ENCODE measurements at regions of chr16 and their contacts with region 1.

Region 1: DNA sequence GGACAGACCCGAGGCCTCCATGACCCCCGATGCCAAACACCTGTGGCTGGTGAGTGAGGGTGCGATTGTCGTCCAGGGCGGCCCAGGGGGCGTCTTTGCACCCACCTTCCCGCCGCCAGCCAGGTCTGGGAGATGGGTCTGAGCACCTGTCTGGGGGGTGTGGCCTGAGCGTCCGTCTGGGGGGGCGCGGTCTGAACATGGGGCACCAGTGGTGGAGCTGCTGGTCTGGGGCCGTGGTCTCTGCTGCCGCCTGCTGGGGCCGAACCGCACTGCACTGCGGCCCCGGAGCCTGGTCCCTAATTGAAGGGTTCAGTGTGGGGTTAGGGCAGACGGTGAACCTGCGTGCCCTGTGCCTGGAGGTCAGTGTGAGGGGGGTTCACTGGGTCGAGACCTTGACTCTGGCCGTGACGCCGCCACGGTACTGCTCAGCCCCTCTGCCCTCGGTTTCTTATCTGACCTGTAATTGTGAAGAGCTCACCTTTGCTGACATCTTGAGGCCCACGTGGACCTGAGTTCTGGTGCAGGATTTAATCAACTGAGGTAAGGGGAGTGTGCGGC is 12.6 kb upstream of the TCF25 start:
- DNase-seq: peak; percentile 82
- ATAC-seq: peak; percentile 96
- H3K4me3 Mint-ChIP-seq: no peak overlapping the region
- H3K27ac Mint-ChIP-seq: no peak overlapping the region
- H3K4me1 Mint-ChIP-seq: peaks cover 25% of the 10 kb centered on the region
- H3K27me3 Mint-ChIP-seq: peaks cover 3% of the 10 kb centered on the region
- CTCF ChIP-seq: peak; percentile 49

Region 2: DNA sequence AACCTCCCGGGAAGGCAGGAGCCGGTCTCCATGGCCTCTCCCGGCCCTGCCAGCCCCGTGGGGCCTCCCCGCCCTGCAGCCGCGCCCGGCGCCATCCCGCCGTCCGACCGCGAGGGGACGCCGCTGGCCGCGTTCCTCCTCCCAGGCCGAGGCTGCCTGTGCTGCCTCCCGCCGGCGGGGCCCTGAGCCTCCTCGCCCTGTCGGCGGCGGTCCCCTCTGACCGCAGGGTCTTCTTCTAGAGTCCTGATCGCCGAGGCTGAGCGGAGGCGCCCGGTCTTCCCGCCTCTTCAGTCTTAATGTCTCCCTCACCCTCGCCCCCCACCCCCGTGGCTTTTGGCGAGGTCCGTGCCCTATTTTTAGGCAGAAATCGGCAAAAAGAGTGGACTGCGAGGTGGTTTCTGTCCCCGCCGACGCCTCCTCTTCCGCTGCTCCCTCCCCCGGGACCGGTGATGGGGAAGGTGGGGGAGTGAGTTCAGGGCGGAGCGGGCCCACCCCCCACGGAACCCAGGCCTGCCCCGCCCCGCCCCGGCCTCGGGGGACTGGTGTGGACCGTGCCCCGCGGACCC is 286.1 kb before region 1 on chr16:
- CTCF ChIA-PET with region 1: no interaction called
- POLR2A ChIA-PET with region 1: no interaction called
- intact Hi-C with region 1: loop called (anchors 2 kb)
- DNase-seq: peak; percentile 49
- ATAC-seq: peak; percentile 57
- H3K4me3 Mint-ChIP-seq: peak overlapping the region; percentile 74
- H3K27ac Mint-ChIP-seq: no peak overlapping the region
- H3K4me1 Mint-ChIP-seq: peaks cover 22% of the 10 kb centered on the region
- H3K27me3 Mint-ChIP-seq: peaks cover 10% of the 10 kb centered on the region
- CTCF ChIP-seq: no peak

Region 3: GRCh38 chr16:89678258-89678657 is 182.6 kb before region 1 on chr16:
- CTCF ChIA-PET with region 1: no interaction called
- POLR2A ChIA-PET with region 1: no interaction called
- intact Hi-C with region 1: no loop called
- DNase-seq: no peak
- ATAC-seq: no peak
- H3K4me3 Mint-ChIP-seq: no peak overlapping the region
- H3K27ac Mint-ChIP-seq: no peak overlapping the region
- H3K4me1 Mint-ChIP-seq: no peaks in the 10 kb centered on the region
- H3K27me3 Mint-ChIP-seq: no peaks in the 10 kb centered on the region
- CTCF ChIP-seq: no peak

Region 4: GRCh38 chr16:89706507-89707263 is 154.1 kb before region 1 on chr16:
- CTCF ChIA-PET with region 1: interaction called, 31 read pairs
- POLR2A ChIA-PET with region 1: interaction called, 5 read pairs
- intact Hi-C with region 1: loop called (anchors 1 kb)
- DNase-seq: no peak
- ATAC-seq: no peak
- H3K4me3 Mint-ChIP-seq: no peak overlapping the region
- H3K27ac Mint-ChIP-seq: no peak overlapping the region
- H3K4me1 Mint-ChIP-seq: peaks cover 15% of the 10 kb centered on the region
- H3K27me3 Mint-ChIP-seq: no peaks in the 10 kb centered on the region
- CTCF ChIP-seq: no peak

Region 5: GRCh38 chr16:89764711-89765201 is 96.1 kb before region 1 on chr16:
- CTCF ChIA-PET with region 1: interaction called, 3 read pairs
- POLR2A ChIA-PET with region 1: interaction called, 4 read pairs
- intact Hi-C with region 1: loop called (anchors 2 kb)
- DNase-seq: peak; percentile 62
- ATAC-seq: peak; percentile 83
- H3K4me3 Mint-ChIP-seq: peak overlapping the region; percentile 88
- H3K27ac Mint-ChIP-seq: peak overlapping the region; percentile 95
- H3K4me1 Mint-ChIP-seq: peaks cover 69% of the 10 kb centered on the region
- H3K27me3 Mint-ChIP-seq: no peaks in the 10 kb centered on the region
- CTCF ChIP-seq: no peak

Region 6: GRCh38 chr16:89815639-89816348 is 45.0 kb before region 1 on chr16:
- CTCF ChIA-PET with region 1: interaction called, 4 read pairs
- POLR2A ChIA-PET with region 1: interaction called, 3 read pairs
- intact Hi-C with region 1: loop called (anchors 2 kb)
- DNase-seq: no peak
- ATAC-seq: no peak
- H3K4me3 Mint-ChIP-seq: peak overlapping the region; percentile 87
- H3K27ac Mint-ChIP-seq: peak overlapping the region; percentile 66
- H3K4me1 Mint-ChIP-seq: peaks cover 19% of the 10 kb centered on the region
- H3K27me3 Mint-ChIP-seq: no peaks in the 10 kb centered on the region
- CTCF ChIP-seq: no peak

Region 7: DNA sequence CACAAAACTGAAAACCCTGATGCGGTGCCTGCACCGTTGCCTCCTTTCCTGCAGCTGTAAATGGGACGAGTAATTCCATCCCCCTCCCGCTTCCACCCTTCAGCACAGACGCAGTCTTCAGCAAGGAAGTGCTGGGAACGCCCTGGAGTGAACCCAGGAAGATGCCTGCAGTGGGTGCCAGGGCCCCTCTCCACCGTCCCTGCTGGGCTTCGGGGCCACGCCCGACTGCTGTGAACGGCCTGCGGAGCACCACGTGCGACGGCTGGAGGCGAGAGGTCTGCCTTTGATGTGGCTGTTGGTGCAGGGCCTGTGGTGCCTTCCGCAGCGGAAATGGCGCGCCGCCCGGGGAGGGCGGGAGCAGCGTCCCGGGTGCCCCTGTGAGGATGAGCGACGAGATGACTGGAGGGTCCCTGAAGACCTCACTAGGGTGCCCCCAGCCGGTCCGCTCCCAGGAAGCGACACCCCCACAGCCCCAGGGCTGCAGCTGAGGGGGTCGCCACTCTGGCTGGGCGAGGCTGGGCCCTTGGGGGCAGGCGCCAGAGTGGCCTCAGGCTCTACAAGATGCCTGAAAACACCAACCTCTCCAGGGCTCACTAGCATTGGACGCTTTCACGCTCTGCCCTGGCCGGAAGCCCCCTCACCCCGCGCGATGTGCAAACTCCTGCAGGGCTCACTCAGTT is 57.1 kb after region 1 on chr16:
- CTCF ChIA-PET with region 1: no interaction called
- POLR2A ChIA-PET with region 1: no interaction called
- intact Hi-C with region 1: no loop called
- DNase-seq: peak; percentile 61
- ATAC-seq: peak; percentile 80
- H3K4me3 Mint-ChIP-seq: peak overlapping the region; percentile 66
- H3K27ac Mint-ChIP-seq: no peak overlapping the region
- H3K4me1 Mint-ChIP-seq: peaks cover 28% of the 10 kb centered on the region
- H3K27me3 Mint-ChIP-seq: peaks cover 17% of the 10 kb centered on the region
- CTCF ChIP-seq: no peak

Measured in activated B cell treated with CpG ODN at 0.5 μM for 24 hours (primary cell).